GM10248 (cell line): ENCODE measurements at regions of chr7 and their contacts with region 1.

Region 1: GRCh38 chr7:39453743-39454355 is 112.4 kb upstream of the YAE1 start:
- DNase-seq: peak; percentile 48
- CTCF ChIP-seq: peak; percentile 79

Region 2: DNA sequence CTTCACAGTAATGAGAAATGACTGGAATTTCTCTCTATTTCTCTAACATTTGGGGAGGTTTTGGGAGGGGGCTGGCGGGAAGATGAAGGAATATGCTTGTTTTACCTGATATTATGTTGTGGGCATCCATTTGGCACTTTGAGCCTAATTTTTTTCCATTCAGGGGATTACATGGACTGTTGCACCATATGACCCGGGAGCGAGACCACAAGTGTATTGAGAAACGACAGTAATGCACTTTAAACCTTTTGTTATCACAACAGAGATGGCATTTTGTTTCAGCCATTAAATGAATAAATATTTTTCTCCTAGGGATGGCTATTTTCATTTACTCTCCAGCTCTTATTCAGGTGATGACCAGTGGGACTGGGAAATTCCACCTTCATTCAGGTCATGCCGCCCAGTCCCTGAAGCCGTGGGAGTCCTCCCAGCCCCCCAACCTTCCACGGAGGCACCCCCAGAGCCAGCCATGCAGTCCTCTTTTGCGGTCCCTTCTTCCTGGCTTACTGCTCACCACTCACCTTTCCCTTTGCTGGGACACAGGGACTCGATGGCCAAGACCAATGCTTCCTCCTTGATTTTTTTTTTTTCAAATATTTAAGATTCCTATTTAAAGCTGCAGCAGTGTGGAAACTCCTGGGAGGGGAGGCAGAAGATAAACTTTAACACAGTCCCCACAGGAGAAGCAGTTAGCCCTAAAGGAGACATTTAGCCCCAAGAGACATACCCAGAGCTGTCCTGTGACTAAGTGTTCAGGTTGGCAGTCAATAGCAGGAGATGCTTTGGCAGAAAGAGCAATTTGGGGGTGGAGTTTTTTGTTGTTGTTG is 78.6 kb before region 1 on chr7:
- CTCF ChIA-PET with region 1: no interaction called
- POLR2A ChIA-PET with region 1: no interaction called
- DNase-seq: no peak
- CTCF ChIP-seq: no peak

Region 3: GRCh38 chr7:39433550-39433949 is 20.3 kb before region 1 on chr7:
- CTCF ChIA-PET with region 1: interaction called, 10 read pairs
- POLR2A ChIA-PET with region 1: no interaction called
- DNase-seq: no peak
- CTCF ChIP-seq: no peak

Region 4: GRCh38 chr7:39465055-39465929 is 11.4 kb after region 1 on chr7:
- CTCF ChIA-PET with region 1: interaction called, 49 read pairs
- POLR2A ChIA-PET with region 1: no interaction called
- DNase-seq: peak; percentile 63
- CTCF ChIP-seq: peak; percentile 78